CD4-positive, alpha-beta T cell (primary cell): ENCODE measurements at regions of chr1 and their contacts with region 1.

Region 1: DNA sequence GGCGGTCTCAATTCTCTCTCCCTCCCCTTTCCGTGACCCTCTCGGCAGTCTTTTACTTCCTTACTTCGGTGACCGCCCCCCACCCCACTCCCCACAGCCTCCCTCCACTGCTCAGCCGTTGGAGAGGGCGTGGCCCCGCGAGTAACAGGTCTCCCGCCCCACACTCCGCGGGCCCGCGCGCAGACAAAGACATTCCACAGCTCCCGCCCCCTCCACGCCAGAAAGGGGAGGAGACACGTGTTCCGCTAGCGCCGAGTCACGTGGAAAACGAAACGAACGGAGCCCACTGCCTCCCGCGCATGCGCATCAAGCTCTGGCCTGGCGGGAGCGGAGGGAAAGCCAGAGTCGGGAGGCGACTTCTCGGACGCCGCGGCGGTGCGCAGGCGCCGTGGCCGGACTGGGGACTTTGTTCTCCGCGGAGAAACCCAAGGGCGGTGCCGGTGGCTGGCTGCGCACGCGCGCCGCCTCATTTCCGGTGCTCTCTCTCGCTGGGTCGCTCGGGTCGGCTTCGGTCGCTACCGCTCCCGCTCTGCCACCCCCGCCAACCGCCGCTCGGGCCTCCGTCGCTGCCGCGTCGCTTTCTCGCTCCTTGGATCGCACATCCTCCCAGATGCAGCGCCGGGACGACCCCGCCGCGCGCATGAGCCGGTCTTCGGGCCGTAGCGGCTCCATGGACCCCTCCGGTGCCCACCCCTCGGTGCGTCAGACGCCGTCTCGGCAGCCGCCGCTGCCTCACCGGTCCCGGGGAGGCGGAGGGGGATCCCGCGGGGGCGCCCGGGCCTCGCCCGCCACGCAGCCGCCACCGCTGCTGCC is at the start of gene KHDRBS1:
- DNase-seq: peak; percentile 95 to 100 (median 98)
- ATAC-seq: peak; percentile 85
- H3K4me3 ChIP-seq: peak within 1 kb of the TSS; percentile 73
- H3K4me3 Mint-ChIP-seq: peak within 1 kb of the TSS; percentile 97
- H3K27ac ChIP-seq: peak within 1 kb of the TSS; percentile 71 to 98
- H3K27ac Mint-ChIP-seq: peak within 1 kb of the TSS; percentile 90
- H3K4me1 ChIP-seq: peaks cover 36% of the 10 kb centered on the region
- H3K4me1 Mint-ChIP-seq: peaks cover 36% of the 10 kb centered on the region
- H3K27me3 ChIP-seq: no peaks in the 10 kb centered on the region
- H3K27me3 Mint-ChIP-seq: no peaks in the 10 kb centered on the region
- CTCF ChIP-seq: no peak
- total RNA-seq, gene KHDRBS1: 91.6 to 94.2 TPM

Region 2: DNA sequence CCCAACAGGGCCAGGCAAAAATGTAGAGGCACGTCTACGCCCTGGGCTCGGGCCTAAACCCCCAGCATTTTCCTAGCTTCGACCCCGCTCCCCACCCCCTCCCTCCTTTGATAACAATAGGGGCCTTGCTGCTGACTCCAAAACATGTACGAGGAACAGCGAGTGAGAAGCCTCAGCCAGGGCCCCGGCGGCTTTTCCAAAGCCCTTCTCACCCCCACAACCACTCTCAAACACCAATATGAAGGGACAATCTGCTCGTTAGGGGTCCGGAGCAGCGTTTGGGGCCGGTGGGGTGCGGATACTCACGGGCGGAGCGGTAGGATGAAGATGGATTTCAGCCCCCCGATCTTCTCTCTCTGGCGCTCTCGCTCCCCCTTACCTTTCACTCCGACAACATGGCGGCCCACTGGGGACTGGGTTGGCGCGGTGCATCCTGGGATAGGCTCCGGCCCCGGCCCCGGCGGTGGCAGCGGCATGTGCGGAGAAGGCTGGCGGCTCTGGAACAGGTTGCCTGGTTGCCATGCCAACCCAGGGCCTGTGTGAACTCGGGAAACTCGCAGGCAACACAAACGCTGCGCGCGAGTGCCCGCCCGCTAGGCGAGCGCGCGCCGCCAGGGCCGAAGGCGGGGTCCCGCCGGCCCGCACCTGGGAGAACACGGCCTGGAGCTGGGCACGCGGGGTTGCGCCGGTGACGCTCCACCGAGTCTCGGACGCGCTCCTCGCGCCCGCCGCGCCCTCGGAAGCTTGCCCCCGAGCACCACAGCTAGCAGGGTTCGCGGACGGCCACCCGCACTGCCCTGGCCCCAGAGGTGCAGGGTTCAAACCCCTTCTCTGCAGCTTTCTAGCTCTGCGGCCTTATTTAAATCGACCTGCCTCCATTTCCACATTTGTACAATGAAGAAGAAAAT is 948.0 kb before region 1 on chr1 and contains the start of gene PUM1:
- CTCF ChIA-PET with region 1: no interaction called
- POLR2A ChIA-PET with region 1: no interaction called
- intact Hi-C with region 1: loop called in 1 of 2 experiments (anchors 10 kb)
- DNase-seq: peak; percentile 96 to 99 (median 98)
- ATAC-seq: peak; percentile 96
- H3K4me3 ChIP-seq: peak within 1 kb of the TSS; percentile 71
- H3K4me3 Mint-ChIP-seq: peak within 1 kb of the TSS; percentile 93
- H3K27ac ChIP-seq: peak within 1 kb of the TSS; percentile 89 to 92
- H3K27ac Mint-ChIP-seq: peak within 1 kb of the TSS; percentile 95
- H3K4me1 ChIP-seq: peaks cover 29% of the 10 kb centered on the region
- H3K4me1 Mint-ChIP-seq: peaks cover 34% of the 10 kb centered on the region
- H3K27me3 ChIP-seq: no peaks in the 10 kb centered on the region
- H3K27me3 Mint-ChIP-seq: no peaks in the 10 kb centered on the region
- CTCF ChIP-seq: no peak
- total RNA-seq, gene PUM1: 190 to 202 TPM

Region 3: GRCh38 chr1:31644560-31645273 is 368.9 kb before region 1 on chr1 and contains the start of gene PEF1:
- CTCF ChIA-PET with region 1: no interaction called
- POLR2A ChIA-PET with region 1: interaction called, 6 read pairs
- intact Hi-C with region 1: loop called in 1 of 2 experiments (anchors 5 kb)
- DNase-seq: peak; percentile 98 to 100 (median 99)
- ATAC-seq: peak; percentile 89
- H3K4me3 ChIP-seq: peak within 1 kb of the TSS; percentile 85
- H3K4me3 Mint-ChIP-seq: peak within 1 kb of the TSS; percentile 99
- H3K27ac ChIP-seq: peak within 1 kb of the TSS; percentile 99
- H3K27ac Mint-ChIP-seq: peak within 1 kb of the TSS; percentile 100
- H3K4me1 ChIP-seq: peaks cover 52% of the 10 kb centered on the region
- H3K4me1 Mint-ChIP-seq: peaks cover 29% of the 10 kb centered on the region
- H3K27me3 ChIP-seq: no peaks in the 10 kb centered on the region
- H3K27me3 Mint-ChIP-seq: no peaks in the 10 kb centered on the region
- CTCF ChIP-seq: no peak
- total RNA-seq, gene PEF1: 42.3 to 45.9 TPM

Region 4: DNA sequence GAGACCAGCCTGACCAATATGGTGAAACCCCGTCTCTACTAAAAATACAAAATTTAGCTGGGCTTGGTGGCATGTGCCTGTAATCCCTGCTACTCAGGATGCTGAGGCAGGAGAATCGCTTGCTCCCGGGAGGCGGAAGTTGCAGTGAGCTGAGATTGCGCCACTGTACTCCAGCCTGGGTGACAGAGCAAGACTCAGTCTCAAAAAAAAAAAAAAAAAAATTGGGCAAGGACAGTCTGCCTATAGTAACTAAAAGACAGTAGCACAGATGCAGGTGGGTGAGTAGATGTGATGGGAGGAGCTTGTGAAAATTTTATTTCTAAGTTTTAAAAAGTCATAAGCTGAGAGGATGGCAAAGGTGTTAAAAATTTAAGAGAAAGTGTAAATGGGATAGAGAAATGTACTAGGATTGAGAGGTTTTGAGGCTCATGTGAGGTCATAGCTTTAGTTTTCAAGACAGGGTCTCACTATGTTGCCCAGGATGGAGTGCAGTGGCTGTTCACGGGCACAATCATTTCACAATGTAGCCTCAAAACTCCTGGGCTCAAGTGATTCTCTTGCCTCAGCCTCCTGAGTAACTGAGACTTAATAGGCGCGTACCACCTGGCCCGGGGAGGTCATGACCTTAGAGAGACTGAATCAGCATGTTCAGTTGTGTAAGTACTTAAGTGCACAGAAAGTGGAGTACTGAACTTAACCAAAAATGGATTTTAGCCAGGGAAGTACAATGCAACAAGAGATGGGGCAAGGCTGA is 109.1 kb before region 1 on chr1:
- CTCF ChIA-PET with region 1: no interaction called
- POLR2A ChIA-PET with region 1: no interaction called
- intact Hi-C with region 1: no loop called
- DNase-seq: peak in 2 of 14 experiments; percentile 39 to 46
- ATAC-seq: peak; percentile 32
- H3K4me3 ChIP-seq: no peak overlapping the region
- H3K4me3 Mint-ChIP-seq: no peak overlapping the region
- H3K27ac ChIP-seq: no peak overlapping the region
- H3K27ac Mint-ChIP-seq: peak overlapping the region; percentile 76
- H3K4me1 ChIP-seq: no peaks in the 10 kb centered on the region
- H3K4me1 Mint-ChIP-seq: peaks cover 60% of the 10 kb centered on the region
- H3K27me3 ChIP-seq: no peaks in the 10 kb centered on the region
- H3K27me3 Mint-ChIP-seq: no peaks in the 10 kb centered on the region
- CTCF ChIP-seq: no peak

Region 5: DNA sequence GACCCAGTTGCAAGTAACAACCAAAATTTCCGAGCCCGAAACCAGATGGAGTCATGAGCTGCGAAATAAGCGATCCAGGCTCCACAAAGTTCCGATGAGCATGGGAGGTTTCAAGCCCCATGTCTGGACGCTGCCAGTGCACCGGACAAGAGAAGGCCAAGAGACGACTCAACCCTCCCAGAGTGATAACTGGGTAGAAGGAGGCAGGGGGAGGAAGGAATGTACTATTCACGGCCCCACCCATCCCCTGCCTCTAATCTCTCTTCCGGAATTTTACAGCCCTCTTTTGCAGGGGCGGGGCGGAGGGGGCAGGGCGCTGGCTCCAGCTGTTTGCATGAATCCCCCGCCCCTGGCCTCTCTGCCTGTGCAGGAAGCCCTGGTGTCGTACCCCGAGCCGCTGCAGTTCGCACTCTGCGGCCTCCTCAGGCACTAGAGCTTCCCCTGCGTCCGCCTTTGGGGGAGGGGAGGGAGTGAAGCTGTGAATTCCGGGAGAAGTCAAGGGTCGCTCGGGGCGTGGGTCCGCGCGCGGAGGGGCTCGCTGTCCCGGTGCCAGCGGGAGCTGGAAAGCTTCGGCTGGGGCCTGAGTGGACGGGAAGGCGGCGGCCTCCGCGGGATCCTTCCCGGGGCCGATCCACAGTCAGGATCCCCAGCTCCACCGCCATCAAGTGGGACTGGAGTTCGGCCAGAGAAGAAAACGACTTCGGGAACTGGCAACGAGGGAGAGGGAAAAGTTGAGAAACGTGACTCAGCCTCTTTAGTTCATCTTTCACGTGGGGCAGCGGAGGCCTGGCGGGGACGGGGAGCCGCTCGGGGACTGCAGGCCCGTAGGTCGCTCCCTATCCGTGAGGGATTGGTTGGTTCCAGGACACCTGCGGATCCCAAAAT is 69.1 kb before region 1 on chr1:
- CTCF ChIA-PET with region 1: no interaction called
- POLR2A ChIA-PET with region 1: interaction called, 8 read pairs
- intact Hi-C with region 1: loop called (anchors 5 kb)
- DNase-seq: peak; percentile 60 to 96 (median 85)
- ATAC-seq: peak; percentile 64
- H3K4me3 ChIP-seq: peak overlapping the region; percentile 58
- H3K4me3 Mint-ChIP-seq: peak overlapping the region; percentile 89
- H3K27ac ChIP-seq: peak overlapping the region; percentile 53 to 83
- H3K27ac Mint-ChIP-seq: peak overlapping the region; percentile 95
- H3K4me1 ChIP-seq: peaks cover 67% of the 10 kb centered on the region
- H3K4me1 Mint-ChIP-seq: peaks cover 54% of the 10 kb centered on the region
- H3K27me3 ChIP-seq: no peaks in the 10 kb centered on the region
- H3K27me3 Mint-ChIP-seq: no peaks in the 10 kb centered on the region
- CTCF ChIP-seq: no peak

Region 6: DNA sequence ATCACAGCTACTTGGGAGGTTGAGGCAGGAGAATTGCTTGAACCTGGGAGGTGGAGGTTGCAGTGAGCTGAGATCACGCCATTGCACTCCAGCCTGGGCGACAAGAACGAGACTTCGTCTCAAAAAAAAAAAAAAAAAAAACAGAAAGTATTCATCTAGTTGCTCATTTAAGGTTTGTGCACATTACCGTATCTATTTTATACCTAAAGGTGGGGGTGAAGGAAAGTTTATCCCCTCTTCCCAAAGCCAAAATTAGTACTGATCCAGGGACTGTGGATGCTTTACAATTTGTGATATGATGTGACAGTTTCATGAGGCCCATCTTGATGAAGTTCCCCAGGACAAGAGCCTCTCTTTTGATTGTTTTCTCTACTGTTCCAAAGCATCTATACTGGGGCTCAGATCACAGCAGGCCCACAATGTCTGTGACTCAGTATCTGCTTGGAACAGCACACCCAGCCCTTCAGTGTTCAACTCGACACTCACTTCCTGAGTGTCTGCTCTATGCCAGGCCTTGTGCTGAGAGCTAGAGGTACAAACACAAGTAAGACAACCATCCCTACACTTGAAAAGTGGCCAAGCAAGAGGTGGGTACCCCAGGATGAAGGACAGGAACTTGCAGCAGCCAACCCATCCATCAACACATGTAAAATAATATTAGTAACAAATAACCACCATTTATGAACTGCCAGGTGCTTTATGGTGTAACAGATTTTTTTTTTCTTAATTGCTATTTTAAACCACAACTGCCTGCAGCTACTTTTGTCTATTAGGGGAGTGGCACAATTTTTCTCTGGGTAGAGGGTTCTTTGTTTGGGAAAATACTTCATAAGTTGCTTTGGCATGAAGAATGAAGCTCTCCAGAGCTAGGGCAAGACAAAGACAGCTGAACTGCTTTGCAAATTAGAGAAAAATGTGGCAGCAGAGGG is 28.9 kb before region 1 on chr1:
- CTCF ChIA-PET with region 1: no interaction called
- POLR2A ChIA-PET with region 1: interaction called, 15 read pairs
- intact Hi-C with region 1: no loop called
- DNase-seq: peak in 13 of 14 experiments; percentile 20 to 73 (median 46)
- ATAC-seq: peak; percentile 71
- H3K4me3 ChIP-seq: no peak overlapping the region
- H3K4me3 Mint-ChIP-seq: peak overlapping the region; percentile 58
- H3K27ac ChIP-seq: peak overlapping the region; percentile 57 to 72
- H3K27ac Mint-ChIP-seq: peak overlapping the region; percentile 91
- H3K4me1 ChIP-seq: peaks cover 64% of the 10 kb centered on the region
- H3K4me1 Mint-ChIP-seq: peaks cover 62% of the 10 kb centered on the region
- H3K27me3 ChIP-seq: no peaks in the 10 kb centered on the region
- H3K27me3 Mint-ChIP-seq: no peaks in the 10 kb centered on the region
- CTCF ChIP-seq: no peak

Region 7: DNA sequence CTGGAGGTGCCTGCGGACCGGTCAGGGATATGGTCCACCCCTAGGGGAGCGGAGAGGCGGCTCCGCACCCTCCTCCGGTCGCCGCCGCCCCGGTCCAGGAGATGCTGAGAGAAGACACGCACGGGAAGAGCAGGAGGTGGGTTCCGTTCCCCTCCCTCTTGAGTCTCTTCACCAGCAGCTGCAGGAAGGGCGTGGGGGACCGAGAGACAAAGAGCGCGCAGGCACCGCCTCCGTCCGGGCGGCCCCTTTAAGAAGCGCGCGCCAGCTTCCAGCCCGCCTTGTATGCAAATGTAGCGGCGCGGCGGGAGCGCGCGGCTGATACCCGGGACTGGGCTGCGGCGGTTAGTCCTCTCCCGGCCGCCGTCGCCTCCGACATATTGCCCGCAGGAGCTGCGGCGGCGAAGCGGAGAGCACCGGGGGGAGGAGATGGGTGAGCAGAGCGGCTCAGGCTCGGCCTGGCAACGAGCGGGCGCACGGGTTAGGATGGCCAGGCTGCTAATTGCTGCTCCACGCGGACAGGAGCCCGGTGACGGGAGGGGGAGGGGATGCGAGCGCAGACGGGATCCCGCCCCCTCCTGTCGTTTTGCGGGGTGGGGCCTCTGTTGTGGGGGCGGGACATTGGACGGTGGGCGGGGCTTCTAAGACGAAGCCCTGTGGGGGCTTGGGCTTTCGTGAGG is 59.2 kb after region 1 on chr1 and contains the start of gene TMEM39B:
- CTCF ChIA-PET with region 1: interaction called, 3 read pairs
- POLR2A ChIA-PET with region 1: interaction called, 48 read pairs
- intact Hi-C with region 1: loop called in 1 of 2 experiments (anchors 1 kb)
- DNase-seq: peak; percentile 86 to 98 (median 92)
- ATAC-seq: peak; percentile 84
- H3K4me3 ChIP-seq: peak within 1 kb of the TSS; percentile 71
- H3K4me3 Mint-ChIP-seq: peak within 1 kb of the TSS; percentile 89
- H3K27ac ChIP-seq: peak within 1 kb of the TSS; percentile 50 to 68
- H3K27ac Mint-ChIP-seq: peak within 1 kb of the TSS; percentile 82
- H3K4me1 ChIP-seq: peaks cover 27% of the 10 kb centered on the region
- H3K4me1 Mint-ChIP-seq: peaks cover 39% of the 10 kb centered on the region
- H3K27me3 ChIP-seq: no peaks in the 10 kb centered on the region
- H3K27me3 Mint-ChIP-seq: no peaks in the 10 kb centered on the region
- CTCF ChIP-seq: no peak
- total RNA-seq, gene TMEM39B: 7.2 to 7.9 TPM

Region 8: GRCh38 chr1:33181921-33182341 is 1168.3 kb after region 1 on chr1 and contains the start of gene TRIM62:
- CTCF ChIA-PET with region 1: no interaction called
- POLR2A ChIA-PET with region 1: no interaction called
- intact Hi-C with region 1: loop called in 1 of 2 experiments (anchors 10 kb)
- DNase-seq: peak; percentile 60 to 89 (median 72)
- ATAC-seq: peak; percentile 71
- H3K4me3 ChIP-seq: peak within 1 kb of the TSS; percentile 88
- H3K4me3 Mint-ChIP-seq: peak within 1 kb of the TSS; percentile 93
- H3K27ac ChIP-seq: peak within 1 kb of the TSS in 1 of 2 donors; percentile 30
- H3K27ac Mint-ChIP-seq: peak within 1 kb of the TSS; percentile 62
- H3K4me1 ChIP-seq: peaks cover 23% of the 10 kb centered on the region
- H3K4me1 Mint-ChIP-seq: peaks cover 34% of the 10 kb centered on the region
- H3K27me3 ChIP-seq: peaks cover 0 to 3% of the 10 kb centered on the region in 2 experiments
- H3K27me3 Mint-ChIP-seq: no peaks in the 10 kb centered on the region
- CTCF ChIP-seq: no peak
- total RNA-seq, gene TRIM62: 18.9 to 23.0 TPM